Activated CD4-positive, alpha-beta memory T cell treated with anti-CD3 and anti-CD28 coated beads for 36 hours (primary cell): ENCODE measurements at regions of chr20 and their contacts with region 1.

Region 1: DNA sequence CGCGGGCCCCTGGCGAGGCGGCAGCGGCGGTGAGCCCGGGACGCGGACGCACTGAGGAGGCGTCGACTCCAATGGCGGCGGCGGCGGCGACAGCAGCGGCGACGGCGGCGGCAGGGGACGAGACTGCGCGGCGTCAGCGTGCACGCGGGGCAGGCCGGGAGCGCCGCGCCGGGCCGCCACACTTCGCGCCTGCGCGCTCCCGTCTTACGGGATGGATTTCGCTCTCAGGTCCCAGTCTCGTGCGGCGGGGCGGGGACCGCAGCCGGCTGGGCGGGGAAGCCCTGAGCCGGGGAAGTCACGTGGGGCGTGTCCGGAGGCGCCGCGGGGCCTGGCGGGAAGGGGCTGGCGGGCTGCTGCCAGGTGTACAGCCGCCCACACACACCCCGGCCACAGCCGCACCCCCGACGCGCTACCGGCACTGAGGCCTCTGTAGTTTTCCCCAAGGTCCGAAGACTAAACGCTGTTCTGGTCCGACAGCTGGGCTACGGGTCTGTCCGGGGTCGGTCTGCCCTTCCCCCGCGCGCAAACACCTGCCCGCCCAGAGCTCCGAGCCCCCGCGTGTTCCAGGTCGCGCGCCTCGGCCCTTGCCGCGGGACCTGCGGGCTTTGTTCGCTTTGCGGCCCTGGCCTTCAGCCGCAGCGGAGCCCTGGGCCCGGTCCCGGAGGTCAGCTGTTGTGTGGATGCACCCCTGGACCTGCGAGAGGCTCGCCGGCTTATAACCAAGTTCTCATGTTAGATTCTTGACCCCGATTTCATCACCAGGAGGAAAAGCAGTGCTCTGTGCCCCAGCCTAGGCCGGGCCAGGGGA is at the start of gene YTHDF1:
- DNase-seq: peak; percentile 98
- H3K4me3 Mint-ChIP-seq: peak within 1 kb of the TSS; percentile 99
- H3K27ac Mint-ChIP-seq: peak within 1 kb of the TSS; percentile 89
- H3K4me1 Mint-ChIP-seq: peaks cover 44% of the 10 kb centered on the region
- H3K27me3 Mint-ChIP-seq: no peaks in the 10 kb centered on the region
- total RNA-seq, gene YTHDF1: 32.8 to 32.9 TPM

Region 2: DNA sequence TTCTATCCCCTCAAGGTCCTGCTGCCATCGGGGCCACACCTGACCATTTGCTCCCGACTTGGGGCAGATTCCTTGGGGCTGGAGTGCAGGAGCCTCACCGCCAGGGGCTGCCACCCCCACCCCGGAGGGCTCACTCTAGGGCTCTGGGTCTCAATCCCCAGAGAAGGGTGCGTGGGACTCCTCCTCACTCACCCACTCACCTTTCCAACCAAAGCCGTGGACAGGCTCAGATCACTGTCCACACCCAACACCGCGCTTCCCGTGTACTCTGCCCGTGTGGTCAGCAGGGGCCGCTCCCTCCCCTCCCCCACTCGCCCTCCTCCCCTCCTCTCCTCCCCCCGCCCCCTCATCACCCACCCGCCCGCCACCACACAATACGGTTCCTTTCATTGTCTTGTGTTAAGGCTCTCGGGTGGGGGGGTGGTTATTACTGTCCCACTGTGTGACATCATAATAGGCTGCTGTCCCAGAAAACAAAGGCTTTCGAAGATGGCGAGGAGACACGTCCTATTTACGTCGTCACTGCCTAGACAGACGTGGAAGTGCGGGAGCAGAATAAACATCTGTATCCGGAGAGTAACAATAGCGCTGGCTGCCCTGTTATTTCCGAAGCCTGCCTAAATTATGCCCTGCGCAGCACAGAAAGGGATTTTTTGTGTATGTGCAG is 86.1 kb before region 1 on chr20:
- CTCF ChIA-PET with region 1: no interaction called
- POLR2A ChIA-PET with region 1: no interaction called
- intact Hi-C with region 1: no loop called
- DNase-seq: no peak
- H3K4me3 Mint-ChIP-seq: no peak overlapping the region
- H3K27ac Mint-ChIP-seq: no peak overlapping the region
- H3K4me1 Mint-ChIP-seq: no peaks in the 10 kb centered on the region
- H3K27me3 Mint-ChIP-seq: peaks cover 16% of the 10 kb centered on the region

Region 3: GRCh38 chr20:63178889-63179686 is 37.2 kb before region 1 on chr20:
- CTCF ChIA-PET with region 1: interaction called, 11 read pairs
- POLR2A ChIA-PET with region 1: interaction called, 4 read pairs
- intact Hi-C with region 1: no loop called
- DNase-seq: peak; percentile 78
- H3K4me3 Mint-ChIP-seq: no peak overlapping the region
- H3K27ac Mint-ChIP-seq: no peak overlapping the region
- H3K4me1 Mint-ChIP-seq: peaks cover 13% of the 10 kb centered on the region
- H3K27me3 Mint-ChIP-seq: peaks cover 48% of the 10 kb centered on the region

Region 4: GRCh38 chr20:63272584-63273579 is 56.6 kb after region 1 on chr20 and contains the start of gene ARFGAP1:
- CTCF ChIA-PET with region 1: interaction called, 3 read pairs
- POLR2A ChIA-PET with region 1: interaction called, 3 read pairs
- intact Hi-C with region 1: loop called (anchors 5 kb)
- DNase-seq: peak; percentile 94
- H3K4me3 Mint-ChIP-seq: peak within 1 kb of the TSS; percentile 81
- H3K27ac Mint-ChIP-seq: peak within 1 kb of the TSS; percentile 61
- H3K4me1 Mint-ChIP-seq: peaks cover 24% of the 10 kb centered on the region
- H3K27me3 Mint-ChIP-seq: no peaks in the 10 kb centered on the region
- total RNA-seq, gene ARFGAP1: 68.4 to 72.4 TPM

Region 5: GRCh38 chr20:63330940-63331339 is 114.7 kb after region 1 on chr20:
- CTCF ChIA-PET with region 1: no interaction called
- POLR2A ChIA-PET with region 1: no interaction called
- intact Hi-C with region 1: no loop called
- DNase-seq: no peak
- H3K4me3 Mint-ChIP-seq: no peak overlapping the region
- H3K27ac Mint-ChIP-seq: no peak overlapping the region
- H3K4me1 Mint-ChIP-seq: peaks cover 6% of the 10 kb centered on the region
- H3K27me3 Mint-ChIP-seq: peaks cover 10% of the 10 kb centered on the region